Right cardiac atrium (tissue), 5 donors: ENCODE measurements at regions of chrX and their contacts with region 1.

Region 1: DNA sequence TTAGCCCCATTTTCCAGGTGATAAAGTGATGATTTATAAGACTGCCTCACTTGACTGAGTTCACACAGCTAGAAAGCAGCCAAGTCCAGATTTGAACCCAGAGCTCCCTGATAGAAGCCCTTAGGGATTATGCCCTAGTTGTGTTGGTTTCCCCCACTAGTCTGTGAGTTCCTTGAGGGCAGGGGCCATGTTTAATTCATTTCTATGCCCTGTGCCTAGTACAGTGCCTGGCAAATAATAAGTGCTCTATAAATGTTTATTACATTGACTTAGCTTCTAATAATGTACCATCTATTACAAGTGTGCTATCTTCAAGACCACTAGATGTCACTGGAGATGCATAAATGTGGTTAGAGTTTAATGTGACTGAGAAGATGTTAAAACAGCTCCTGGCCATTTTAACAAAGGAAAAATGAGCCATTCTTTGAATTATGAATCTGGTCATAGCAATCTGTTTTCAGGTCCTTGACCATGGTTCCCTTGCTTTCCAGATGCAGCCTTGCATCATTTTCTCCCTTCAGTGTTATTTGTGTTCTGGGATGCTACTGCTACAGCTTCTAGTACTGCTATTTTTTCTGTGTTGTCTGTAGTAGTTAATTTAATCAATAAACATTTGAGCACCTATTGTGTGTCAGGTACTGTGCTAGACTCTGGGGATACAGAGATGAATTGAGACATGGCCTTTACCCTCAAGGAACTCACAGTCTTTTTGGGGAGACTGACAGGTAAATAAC is 43.2 kb downstream of the SLC9A6 start:
- DNase-seq: no peak
- ATAC-seq: peak in 1 of 2 donors; percentile 48
- H3K4me3 ChIP-seq: no peak overlapping the region
- H3K27ac ChIP-seq: peak overlapping the region; percentile 39
- H3K4me1 ChIP-seq: no peaks in the 10 kb centered on the region
- H3K27me3 ChIP-seq: no peaks in the 10 kb centered on the region

Region 2: GRCh38 chrX:136115126-136115903 is 86.9 kb after region 1 on chrX:
- intact Hi-C with region 1: loop called in 1 of 4 experiments (anchors 10 kb)
- DNase-seq: no peak
- ATAC-seq: no peak
- H3K4me3 ChIP-seq: no peak overlapping the region
- H3K27ac ChIP-seq: no peak overlapping the region
- H3K4me1 ChIP-seq: no peaks in the 10 kb centered on the region
- H3K27me3 ChIP-seq: no peaks in the 10 kb centered on the region

Region 3: GRCh38 chrX:136147315-136147901 is 119.0 kb after region 1 on chrX and contains the start of gene FHL1:
- intact Hi-C with region 1: loop called in 2 of 4 experiments (anchors 10 kb)
- DNase-seq: peak; percentile 73 to 91 (median 89)
- ATAC-seq: peak; percentile 93
- H3K4me3 ChIP-seq: peak within 1 kb of the TSS; percentile 58
- H3K27ac ChIP-seq: peak within 1 kb of the TSS; percentile 73
- H3K4me1 ChIP-seq: no peaks in the 10 kb centered on the region
- H3K27me3 ChIP-seq: no peaks in the 10 kb centered on the region
- total RNA-seq, gene FHL1: 255 to 871 (median 312) TPM

Region 4: GRCh38 chrX:136162831-136163570 is 134.6 kb after region 1 on chrX:
- intact Hi-C with region 1: loop called (anchors 2 to 10 kb)
- DNase-seq: peak; percentile 57 to 83 (median 78)
- ATAC-seq: peak; percentile 78 to 84
- H3K4me3 ChIP-seq: no peak overlapping the region
- H3K27ac ChIP-seq: peak overlapping the region; percentile 88
- H3K4me1 ChIP-seq: peaks cover 7% of the 10 kb centered on the region
- H3K27me3 ChIP-seq: no peaks in the 10 kb centered on the region

Region 5: GRCh38 chrX:136209016-136209738 is 180.8 kb after region 1 on chrX:
- intact Hi-C with region 1: loop called in 2 of 4 experiments (anchors 5 to 10 kb)
- DNase-seq: peak; percentile 68 to 84 (median 74)
- ATAC-seq: peak; percentile 58 to 60
- H3K4me3 ChIP-seq: no peak overlapping the region
- H3K27ac ChIP-seq: peak overlapping the region; percentile 90
- H3K4me1 ChIP-seq: peaks cover 2% of the 10 kb centered on the region
- H3K27me3 ChIP-seq: no peaks in the 10 kb centered on the region

Region 6: GRCh38 chrX:136214551-136214950 is 186.1 kb after region 1 on chrX:
- intact Hi-C with region 1: loop called in 2 of 4 experiments (anchors 5 to 10 kb)
- DNase-seq: no peak
- ATAC-seq: peak in 1 of 2 donors; percentile 28
- H3K4me3 ChIP-seq: no peak overlapping the region
- H3K27ac ChIP-seq: peak overlapping the region; percentile 30
- H3K4me1 ChIP-seq: peaks cover 2% of the 10 kb centered on the region
- H3K27me3 ChIP-seq: no peaks in the 10 kb centered on the region

Region 7: DNA sequence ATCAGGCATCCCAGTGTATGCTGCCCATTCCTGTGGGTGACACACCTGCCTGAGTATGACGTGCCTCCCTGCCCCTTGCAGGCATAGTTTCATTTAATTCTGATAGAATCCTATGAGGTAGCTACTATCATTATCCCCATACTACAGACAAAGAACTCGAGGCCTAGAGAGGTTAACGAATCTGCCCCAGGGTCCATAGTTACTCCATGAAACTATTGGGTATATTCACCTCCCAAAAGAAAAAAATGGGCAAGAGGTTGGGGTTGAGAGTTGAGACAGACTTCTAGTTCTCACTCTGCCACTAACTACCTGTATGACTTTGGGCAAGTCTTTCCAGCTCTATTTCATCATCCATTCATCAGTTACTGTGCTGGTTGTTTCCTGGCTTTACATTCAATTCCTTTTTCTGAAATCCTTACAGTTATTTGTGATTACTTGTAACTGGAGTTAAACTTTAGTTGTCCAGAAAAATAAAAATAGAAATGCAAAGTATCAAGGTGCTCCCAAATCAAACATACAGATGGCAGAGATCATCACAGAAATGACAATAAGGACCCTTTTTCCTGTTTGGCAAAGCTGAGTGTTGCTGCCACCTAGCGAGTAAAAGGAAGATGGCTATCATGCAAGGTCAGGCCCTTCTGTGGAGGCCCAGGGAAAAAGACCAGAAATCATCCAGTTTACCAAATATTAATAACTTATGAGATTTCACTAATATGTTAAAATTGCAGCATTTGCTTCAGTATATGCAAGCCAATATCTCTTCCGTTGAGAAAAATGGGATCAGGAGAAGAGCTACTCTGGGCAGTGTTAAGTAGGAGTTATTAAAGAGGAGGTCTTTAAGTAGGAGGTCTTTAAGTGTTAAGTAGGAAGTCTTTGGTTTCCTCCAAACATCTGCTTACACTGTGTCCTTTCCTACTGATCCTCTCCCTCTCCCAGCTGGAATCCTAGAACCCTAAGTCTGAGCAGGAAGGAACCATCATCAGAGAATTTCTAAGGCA is 239.9 kb after region 1 on chrX:
- intact Hi-C with region 1: loop called in 2 of 4 experiments (anchors 5 kb)
- DNase-seq: no peak
- ATAC-seq: peak in 1 of 2 donors; percentile 56
- H3K4me3 ChIP-seq: no peak overlapping the region
- H3K27ac ChIP-seq: no peak overlapping the region
- H3K4me1 ChIP-seq: no peaks in the 10 kb centered on the region
- H3K27me3 ChIP-seq: no peaks in the 10 kb centered on the region

Region 8: DNA sequence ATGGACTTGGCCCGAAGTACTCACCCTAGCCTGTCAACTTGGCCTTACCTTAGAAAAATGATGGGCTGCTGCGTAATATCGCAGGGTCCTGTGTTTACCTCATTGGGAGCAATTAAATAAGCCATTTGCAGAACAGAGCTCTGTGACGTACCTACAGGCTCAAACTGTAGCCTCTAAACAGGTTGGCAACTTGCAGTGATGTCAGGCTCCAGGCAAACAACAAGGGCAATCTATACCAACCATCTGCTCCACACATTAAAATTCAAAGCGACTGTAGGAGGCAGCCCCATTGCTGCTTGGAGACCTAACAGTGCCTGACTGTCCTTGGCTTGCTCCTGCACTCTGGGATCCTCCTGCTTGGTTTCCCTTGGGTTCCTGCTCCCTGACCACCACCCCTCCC is 520.8 kb after region 1 on chrX:
- intact Hi-C with region 1: no loop called
- DNase-seq: no peak
- ATAC-seq: no peak
- H3K4me3 ChIP-seq: no peak overlapping the region
- H3K27ac ChIP-seq: no peak overlapping the region
- H3K4me1 ChIP-seq: no peaks in the 10 kb centered on the region
- H3K27me3 ChIP-seq: no peaks in the 10 kb centered on the region